PC-9 (cell line): ENCODE measurements at regions of chr15 and their contacts with region 1.

Region 1: DNA sequence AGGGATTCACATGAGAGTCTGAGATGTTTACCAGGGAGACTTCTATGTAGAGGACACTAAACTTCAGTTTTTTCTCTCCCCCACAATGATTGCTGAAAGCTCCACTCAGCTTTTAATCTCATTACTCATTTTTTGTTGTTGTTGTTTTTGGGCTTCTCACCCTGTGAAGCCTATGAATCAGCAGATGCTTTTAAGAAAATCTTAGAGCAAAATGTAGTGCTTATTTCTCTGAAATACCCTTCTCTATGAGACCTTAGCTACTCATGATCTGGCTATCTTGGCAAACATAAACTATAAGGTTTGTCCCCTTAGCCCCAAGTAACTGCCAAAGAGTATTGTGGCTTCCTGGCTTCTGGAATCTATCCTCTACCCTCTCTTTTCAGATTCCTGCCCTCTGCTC is 537.3 kb downstream of the OCA2 start:
- DNase-seq: no peak
- H3K4me3 ChIP-seq: no peak overlapping the region
- H3K27ac ChIP-seq: no peak overlapping the region
- H3K4me1 ChIP-seq: no peaks in the 10 kb centered on the region
- H3K27me3 ChIP-seq: no peaks in the 10 kb centered on the region
- CTCF ChIP-seq: no peak

Region 2: GRCh38 chr15:26890451-26890850 is 671.4 kb before region 1 on chr15:
- CTCF ChIA-PET with region 1: interaction called, 11 read pairs
- POLR2A ChIA-PET with region 1: no interaction called
- intact Hi-C with region 1: no loop called
- DNase-seq: no peak
- H3K4me3 ChIP-seq: no peak overlapping the region
- H3K27ac ChIP-seq: no peak overlapping the region
- H3K4me1 ChIP-seq: no peaks in the 10 kb centered on the region
- H3K27me3 ChIP-seq: no peaks in the 10 kb centered on the region
- CTCF ChIP-seq: no peak

Region 3: GRCh38 chr15:27382361-27383025 is 179.3 kb before region 1 on chr15:
- CTCF ChIA-PET with region 1: no interaction called
- POLR2A ChIA-PET with region 1: no interaction called
- intact Hi-C with region 1: no loop called
- DNase-seq: no peak
- H3K4me3 ChIP-seq: no peak overlapping the region
- H3K27ac ChIP-seq: no peak overlapping the region
- H3K4me1 ChIP-seq: no peaks in the 10 kb centered on the region
- H3K27me3 ChIP-seq: 0 out of 2 replicates have a peak, but pooled peaks cover 2% of the 10 kb centered on the region
- CTCF ChIP-seq: no peak

Region 4: DNA sequence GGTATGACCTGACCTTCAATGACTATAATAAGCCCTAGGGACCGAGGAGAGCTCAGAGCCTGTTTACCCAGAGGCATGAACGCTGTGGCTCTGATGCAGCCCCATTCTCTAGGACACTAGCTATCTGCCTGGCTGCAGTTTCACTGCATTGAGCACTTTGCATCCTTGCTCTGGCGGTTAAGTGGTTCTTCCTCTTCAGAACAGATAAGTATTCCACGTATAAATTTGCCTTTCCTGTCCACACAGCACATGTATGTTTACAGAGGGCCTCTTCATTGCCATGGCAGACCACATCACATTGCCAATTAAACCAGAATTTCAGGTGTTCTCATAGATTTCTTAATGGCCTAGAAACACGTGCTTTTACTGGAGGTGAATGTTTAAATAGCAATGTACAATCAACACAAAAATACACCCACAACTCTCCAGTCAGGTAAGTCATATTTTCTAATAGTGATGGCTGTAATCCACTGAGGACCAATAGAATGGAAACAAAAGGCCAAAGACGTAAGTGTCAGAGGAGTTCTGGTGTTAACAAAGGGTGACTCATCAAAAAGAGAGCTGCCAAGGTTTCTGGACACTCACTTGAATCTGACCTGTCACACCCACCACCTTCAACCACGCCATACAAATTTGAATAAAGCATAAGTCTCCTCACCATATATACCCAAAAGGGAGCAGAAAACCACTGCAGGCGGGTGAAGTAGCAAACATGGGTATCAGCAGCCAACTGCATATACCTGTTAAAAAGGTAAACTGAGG is 16.1 kb before region 1 on chr15:
- CTCF ChIA-PET with region 1: no interaction called
- POLR2A ChIA-PET with region 1: no interaction called
- intact Hi-C with region 1: no loop called
- DNase-seq: no peak
- H3K4me3 ChIP-seq: no peak overlapping the region
- H3K27ac ChIP-seq: no peak overlapping the region
- H3K4me1 ChIP-seq: no peaks in the 10 kb centered on the region
- H3K27me3 ChIP-seq: no peaks in the 10 kb centered on the region
- CTCF ChIP-seq: no peak